Ovary (tissue), 10 donors: ENCODE measurements at regions of chr2 and their contacts with region 1.

Region 1: DNA sequence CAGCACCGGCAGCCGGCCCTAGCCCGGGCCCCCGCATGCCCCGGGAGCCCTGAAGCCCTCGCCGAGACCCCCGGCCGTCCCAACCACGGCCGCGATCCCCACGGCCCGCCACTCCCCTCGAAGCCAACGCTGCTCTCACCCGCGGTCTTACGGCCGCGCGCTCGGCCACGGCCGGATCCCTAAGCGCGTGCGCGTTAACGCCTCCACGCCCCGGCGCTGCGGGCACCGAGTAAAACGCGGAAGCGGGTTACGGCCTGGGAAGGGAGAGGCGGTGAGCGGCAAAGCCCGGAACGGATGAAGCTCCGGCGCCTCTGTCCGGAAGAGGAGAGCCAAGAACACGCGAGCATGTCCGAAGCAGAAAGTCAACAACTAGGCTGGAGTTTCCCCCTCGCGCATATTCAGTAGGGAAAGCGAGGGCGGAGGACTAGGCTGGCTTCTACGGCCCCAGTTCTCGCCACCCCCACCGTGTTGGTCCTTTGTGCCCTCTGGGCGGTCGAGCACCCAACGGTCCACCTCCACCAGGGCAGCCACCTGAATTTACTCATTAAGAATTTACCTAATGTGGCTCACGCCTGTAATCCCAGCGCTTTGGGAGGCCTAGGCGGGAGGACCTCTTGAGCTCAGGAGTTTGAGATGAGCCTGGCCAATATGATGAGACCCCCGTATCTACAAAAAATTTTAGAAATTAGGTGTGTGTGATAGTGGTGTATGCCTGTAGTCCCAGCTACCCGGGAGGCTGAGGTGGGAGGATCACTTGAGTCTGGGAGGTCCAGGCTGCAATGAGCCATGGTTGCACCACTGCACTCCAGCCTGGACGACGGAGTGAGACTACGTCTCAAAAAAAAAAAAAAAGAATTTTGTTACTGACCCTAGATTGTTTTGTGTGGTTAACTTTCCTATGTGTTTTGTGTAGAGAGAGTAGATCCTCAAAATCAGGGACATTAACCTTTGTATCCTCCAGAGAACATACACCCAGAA is at the start of gene KANSL3:
- DNase-seq: peak; percentile 88 to 96 (median 91)
- H3K4me3 ChIP-seq: peak within 1 kb of the TSS; percentile 80
- H3K27ac ChIP-seq: peak within 1 kb of the TSS; percentile 86 to 93
- H3K4me1 ChIP-seq: peaks cover 5% of the 10 kb centered on the region
- H3K27me3 ChIP-seq: no peaks in the 10 kb centered on the region
- CTCF ChIP-seq: peak in 1 of 3 donors; percentile 61
- EP300 ChIP-seq: no peak
- POLR2A ChIP-seq: peak; percentile 99
- total RNA-seq, gene KANSL3: 34.5 to 55.7 (median 48.4) TPM

Region 2: DNA sequence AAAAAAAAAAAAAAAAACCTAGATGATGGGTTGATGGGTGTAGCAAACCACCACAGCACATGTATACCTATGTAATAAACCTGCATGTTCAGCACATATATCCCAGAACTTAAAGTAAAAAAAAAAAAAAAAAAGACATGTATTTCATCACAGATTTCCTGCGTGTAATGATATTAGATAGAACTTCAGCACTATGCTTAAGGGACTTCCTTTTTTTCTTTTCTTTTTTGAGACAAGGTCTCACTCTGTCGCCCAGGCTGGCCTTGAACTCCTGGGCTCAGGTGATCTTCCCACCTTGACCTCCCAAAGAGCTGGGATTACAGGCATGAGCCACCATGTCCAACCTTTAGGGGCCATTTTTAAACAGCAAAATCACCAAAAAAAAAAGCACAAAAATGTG is 175.3 kb before region 1 on chr2:
- intact Hi-C with region 1: no loop called
- DNase-seq: no peak
- H3K4me3 ChIP-seq: no peak overlapping the region
- H3K27ac ChIP-seq: no peak overlapping the region
- H3K4me1 ChIP-seq: no peaks in the 10 kb centered on the region
- H3K27me3 ChIP-seq: no peaks in the 10 kb centered on the region
- CTCF ChIP-seq: no peak
- EP300 ChIP-seq: no peak
- POLR2A ChIP-seq: no peak

Region 3: DNA sequence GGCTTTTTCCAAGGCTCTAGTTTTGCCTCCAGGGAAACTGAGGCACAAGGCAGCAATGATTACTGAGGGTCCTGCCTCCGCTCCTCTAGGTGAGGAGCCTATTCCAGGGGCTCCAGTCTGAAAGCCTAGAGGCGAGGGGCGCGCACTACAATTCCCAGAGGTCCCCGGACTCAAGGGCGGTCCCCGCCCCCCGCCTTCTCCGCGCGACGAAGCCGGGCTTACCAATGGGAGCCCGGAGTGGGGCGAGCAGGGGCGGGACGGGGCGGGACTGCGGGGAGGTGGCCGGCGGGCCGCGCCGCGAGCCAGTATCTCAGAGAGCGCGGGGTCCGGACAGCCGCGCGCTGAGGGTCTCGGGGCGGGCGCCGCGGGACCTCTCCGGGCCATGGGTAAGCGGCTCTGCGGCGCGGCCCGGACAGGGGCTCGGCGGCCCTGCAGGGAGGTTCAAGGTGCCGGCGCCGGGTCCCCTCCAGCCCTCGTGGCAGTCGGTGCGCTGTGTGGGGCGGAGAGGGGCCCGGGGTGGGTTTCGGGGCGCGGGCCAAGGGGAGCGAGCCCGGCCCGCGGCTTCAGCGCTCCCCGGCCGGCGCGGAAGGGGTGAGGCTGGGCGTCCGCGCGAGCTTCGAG is 101.9 kb before region 1 on chr2 and contains the start of gene ARID5A:
- intact Hi-C with region 1: loop called in 1 of 4 experiments (anchors 10 kb)
- DNase-seq: peak; percentile 92 to 96 (median 95)
- H3K4me3 ChIP-seq: peak within 1 kb of the TSS; percentile 72
- H3K27ac ChIP-seq: peak within 1 kb of the TSS; percentile 99
- H3K4me1 ChIP-seq: peaks cover 13% of the 10 kb centered on the region
- H3K27me3 ChIP-seq: no peaks in the 10 kb centered on the region
- CTCF ChIP-seq: peak; percentile 16 to 71 (median 57)
- EP300 ChIP-seq: no peak
- POLR2A ChIP-seq: peak; percentile 97
- total RNA-seq, gene ARID5A: 11.7 to 46.1 (median 17.1) TPM

Region 4: GRCh38 chr2:96739633-96740428 is 101.4 kb after region 1 on chr2 and contains the start of gene LMAN2L:
- intact Hi-C with region 1: loop called in 1 of 4 experiments (anchors 10 kb)
- DNase-seq: peak; percentile 96 to 99 (median 97)
- H3K4me3 ChIP-seq: peak within 1 kb of the TSS; percentile 85
- H3K27ac ChIP-seq: peak within 1 kb of the TSS; percentile 62 to 68
- H3K4me1 ChIP-seq: peaks cover 4% of the 10 kb centered on the region
- H3K27me3 ChIP-seq: no peaks in the 10 kb centered on the region
- CTCF ChIP-seq: no peak
- EP300 ChIP-seq: no peak
- POLR2A ChIP-seq: peak; percentile 61
- total RNA-seq, gene LMAN2L: 14.8 to 29.4 (median 22.5) TPM

Region 5: GRCh38 chr2:96960153-96960961 is 321.9 kb after region 1 on chr2:
- intact Hi-C with region 1: loop called in 1 of 4 experiments (anchors 10 kb)
- DNase-seq: peak; percentile 92 to 98 (median 94)
- H3K4me3 ChIP-seq: no peak overlapping the region
- H3K27ac ChIP-seq: no peak overlapping the region
- H3K4me1 ChIP-seq: no peaks in the 10 kb centered on the region
- H3K27me3 ChIP-seq: no peaks in the 10 kb centered on the region
- CTCF ChIP-seq: peak; percentile 92 to 96 (median 94)
- EP300 ChIP-seq: no peak
- POLR2A ChIP-seq: peak; percentile 33